A673 (cell line): ENCODE measurements at regions of chr7 and their contacts with region 1.

Region 1: DNA sequence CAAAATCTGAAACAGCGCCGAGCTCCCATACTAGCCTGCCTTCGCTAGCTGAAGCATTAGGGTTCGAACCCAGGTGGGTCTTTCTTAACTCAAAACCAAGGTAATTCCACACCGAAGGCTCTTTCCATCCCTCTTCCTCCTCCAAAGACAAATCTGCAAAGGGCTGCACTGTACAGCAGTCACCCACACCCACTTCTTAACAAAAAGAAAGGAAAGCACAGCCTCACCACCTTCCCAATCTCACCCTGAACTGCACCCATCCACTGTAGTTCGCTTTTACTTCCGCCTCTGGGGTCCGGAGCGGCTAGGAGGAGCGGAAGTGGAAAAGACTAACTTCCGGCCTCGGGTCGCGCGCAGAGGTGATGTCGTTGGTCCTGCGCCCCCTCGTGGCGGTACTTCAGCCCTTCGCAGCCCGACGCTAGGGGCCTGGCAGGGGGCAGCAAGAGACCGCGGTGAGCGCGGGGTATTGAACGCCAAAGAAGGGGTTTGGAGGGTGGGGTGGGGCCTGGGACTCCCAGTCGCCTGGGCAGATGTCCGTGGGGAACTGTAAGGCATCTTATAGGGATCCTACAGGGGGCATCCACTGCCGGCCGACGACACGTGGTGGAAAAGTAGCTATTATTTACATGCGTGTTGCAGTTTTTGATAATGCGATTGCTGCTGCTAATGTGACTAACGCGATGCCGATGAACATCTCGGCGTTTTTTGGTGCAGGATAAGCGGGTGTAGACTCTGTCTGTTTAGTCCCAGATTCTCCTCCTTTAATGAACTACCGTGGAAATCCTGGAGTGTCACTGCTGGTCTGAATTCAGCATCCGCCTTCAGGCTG is at the start of gene MTERF1:
- DNase-seq: peak; percentile 98
- H3K4me3 ChIP-seq: peak within 1 kb of the TSS; percentile 70
- H3K27ac ChIP-seq: peak within 1 kb of the TSS; percentile 78
- H3K4me1 ChIP-seq: peaks cover 53% of the 10 kb centered on the region
- H3K27me3 ChIP-seq: no peaks in the 10 kb centered on the region
- CTCF ChIP-seq: peak; percentile 100
- total RNA-seq, gene MTERF1: 23.0 and 31.9 TPM in 2 replicates

Region 2: GRCh38 chr7:91325726-91326125 is 554.9 kb before region 1 on chr7:
- CTCF ChIA-PET with region 1: no interaction called
- POLR2A ChIA-PET with region 1: no interaction called
- intact Hi-C with region 1: loop called (anchors 10 kb)
- DNase-seq: peak; percentile 97
- H3K4me3 ChIP-seq: no peak overlapping the region
- H3K27ac ChIP-seq: peak overlapping the region; percentile 93
- H3K4me1 ChIP-seq: peaks cover 59% of the 10 kb centered on the region
- H3K27me3 ChIP-seq: no peaks in the 10 kb centered on the region
- CTCF ChIP-seq: no peak

Region 3: DNA sequence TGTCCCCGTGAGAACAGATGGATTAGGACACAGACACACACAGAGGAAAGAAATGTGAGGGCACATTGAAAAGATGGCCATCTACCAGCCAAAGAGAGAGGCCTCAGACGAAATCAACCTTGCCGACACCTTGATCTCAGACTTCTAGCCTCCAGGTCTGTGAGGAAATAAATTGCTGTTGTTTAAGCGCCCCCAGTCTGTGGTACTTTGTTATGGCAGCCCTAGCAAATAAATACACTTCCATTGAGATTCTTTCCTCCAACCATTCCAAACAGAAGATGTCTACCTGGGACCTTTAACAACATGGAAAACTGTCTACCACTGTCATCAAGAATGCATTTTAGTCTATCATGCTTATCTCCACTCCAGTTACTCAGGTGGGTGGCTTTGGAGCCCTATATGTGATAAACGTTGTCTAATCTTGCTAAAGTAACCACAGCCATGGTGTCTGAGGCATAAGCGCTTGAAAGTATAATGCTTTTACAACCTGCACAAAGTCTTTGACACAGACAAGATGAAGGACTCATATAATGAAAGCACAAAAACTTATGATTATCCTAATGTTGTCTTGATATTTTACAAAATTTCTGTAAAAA is 244.4 kb before region 1 on chr7:
- CTCF ChIA-PET with region 1: interaction called, 3 read pairs
- POLR2A ChIA-PET with region 1: no interaction called
- intact Hi-C with region 1: loop called (anchors 5 kb)
- DNase-seq: peak; percentile 67
- H3K4me3 ChIP-seq: no peak overlapping the region
- H3K27ac ChIP-seq: no peak overlapping the region
- H3K4me1 ChIP-seq: peaks cover 29% of the 10 kb centered on the region
- H3K27me3 ChIP-seq: no peaks in the 10 kb centered on the region
- CTCF ChIP-seq: peak; percentile 82

Region 4: DNA sequence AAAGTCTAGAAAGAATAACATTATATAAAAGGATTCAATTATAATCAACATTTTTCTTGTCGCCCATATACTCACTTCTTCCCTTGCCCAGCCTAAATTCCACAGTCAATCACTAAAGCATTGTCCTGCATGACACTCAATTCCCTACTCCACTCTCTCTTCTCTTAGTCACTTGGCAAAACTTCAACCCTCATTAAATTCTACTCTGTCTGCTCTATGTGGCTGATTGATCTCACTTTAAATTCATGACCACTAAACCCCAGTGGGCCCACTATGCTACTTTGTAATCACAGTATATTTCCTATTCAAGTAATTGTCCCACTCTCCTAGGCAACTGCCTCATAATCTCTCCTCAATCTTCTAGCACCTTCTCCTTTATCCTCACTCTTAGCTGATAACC is 54.2 kb before region 1 on chr7:
- CTCF ChIA-PET with region 1: interaction called, 4 read pairs
- POLR2A ChIA-PET with region 1: no interaction called
- intact Hi-C with region 1: loop called (anchors 2 kb)
- DNase-seq: peak; percentile 96
- H3K4me3 ChIP-seq: peak overlapping the region; percentile 7
- H3K27ac ChIP-seq: peak overlapping the region; percentile 84
- H3K4me1 ChIP-seq: peaks cover 62% of the 10 kb centered on the region
- H3K27me3 ChIP-seq: no peaks in the 10 kb centered on the region
- CTCF ChIP-seq: no peak

Region 5: GRCh38 chr7:91940572-91941341 is 60.1 kb after region 1 on chr7 and contains the start of gene AKAP9:
- CTCF ChIA-PET with region 1: no interaction called
- POLR2A ChIA-PET with region 1: no interaction called
- intact Hi-C with region 1: loop called (anchors 1 kb)
- DNase-seq: peak; percentile 82
- H3K4me3 ChIP-seq: peak within 1 kb of the TSS; percentile 82
- H3K27ac ChIP-seq: peak within 1 kb of the TSS; percentile 92
- H3K4me1 ChIP-seq: peaks cover 15% of the 10 kb centered on the region
- H3K27me3 ChIP-seq: no peaks in the 10 kb centered on the region
- CTCF ChIP-seq: no peak
- total RNA-seq, gene AKAP9: 62.1 and 62.6 TPM in 2 replicates

Region 6: DNA sequence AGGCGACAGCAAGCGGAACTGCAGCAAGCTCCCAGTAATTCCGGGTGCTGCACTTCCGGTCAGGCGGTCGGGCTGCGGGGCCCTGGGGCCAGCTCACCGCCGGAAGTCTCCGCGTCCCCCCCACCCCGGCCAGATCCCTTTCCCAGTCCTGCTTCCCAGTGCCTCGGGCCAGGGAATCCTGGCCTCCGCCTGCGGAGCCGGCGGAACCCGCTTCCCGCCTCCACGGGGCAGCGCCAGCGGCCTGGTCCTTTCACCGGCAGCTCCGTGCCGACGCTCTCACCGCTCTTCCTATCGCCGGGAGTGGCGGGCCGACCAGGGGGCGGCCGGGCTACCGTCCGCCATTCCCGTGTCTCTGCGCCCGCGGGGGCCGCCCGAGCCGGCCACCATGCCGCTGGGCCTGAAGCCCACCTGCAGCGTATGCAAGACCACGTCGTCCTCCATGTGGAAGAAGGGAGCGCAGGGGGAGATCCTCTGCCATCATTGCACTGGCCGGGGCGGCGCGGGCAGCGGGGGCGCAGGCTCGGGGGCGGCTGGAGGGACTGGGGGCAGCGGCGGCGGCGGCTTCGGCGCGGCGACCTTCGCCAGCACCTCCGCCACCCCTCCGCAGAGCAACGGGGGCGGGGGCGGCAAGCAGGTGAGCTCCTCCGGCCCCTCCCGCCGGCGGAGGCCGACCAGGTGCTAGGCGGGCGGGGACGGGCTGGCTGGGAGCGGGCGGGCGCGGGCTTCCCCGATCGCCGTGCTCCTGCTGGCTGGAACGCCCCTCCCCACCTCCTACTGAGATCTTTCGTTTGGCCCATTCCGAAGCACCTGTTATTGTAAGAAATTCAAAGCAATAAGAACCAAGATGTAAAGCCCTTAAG is 566.9 kb after region 1 on chr7 and contains the start of gene GATAD1:
- CTCF ChIA-PET with region 1: no interaction called
- POLR2A ChIA-PET with region 1: no interaction called
- intact Hi-C with region 1: loop called (anchors 5 kb)
- DNase-seq: peak; percentile 91
- H3K4me3 ChIP-seq: peak within 1 kb of the TSS; percentile 94
- H3K27ac ChIP-seq: peak within 1 kb of the TSS; percentile 93
- H3K4me1 ChIP-seq: peaks cover 7% of the 10 kb centered on the region
- H3K27me3 ChIP-seq: no peaks in the 10 kb centered on the region
- CTCF ChIP-seq: peak; percentile 92
- total RNA-seq, gene GATAD1: 19.4 and 23.3 TPM in 2 replicates